ENCODE measurements at regions of chr3 and their contacts with region 1.

Region 1: DNA sequence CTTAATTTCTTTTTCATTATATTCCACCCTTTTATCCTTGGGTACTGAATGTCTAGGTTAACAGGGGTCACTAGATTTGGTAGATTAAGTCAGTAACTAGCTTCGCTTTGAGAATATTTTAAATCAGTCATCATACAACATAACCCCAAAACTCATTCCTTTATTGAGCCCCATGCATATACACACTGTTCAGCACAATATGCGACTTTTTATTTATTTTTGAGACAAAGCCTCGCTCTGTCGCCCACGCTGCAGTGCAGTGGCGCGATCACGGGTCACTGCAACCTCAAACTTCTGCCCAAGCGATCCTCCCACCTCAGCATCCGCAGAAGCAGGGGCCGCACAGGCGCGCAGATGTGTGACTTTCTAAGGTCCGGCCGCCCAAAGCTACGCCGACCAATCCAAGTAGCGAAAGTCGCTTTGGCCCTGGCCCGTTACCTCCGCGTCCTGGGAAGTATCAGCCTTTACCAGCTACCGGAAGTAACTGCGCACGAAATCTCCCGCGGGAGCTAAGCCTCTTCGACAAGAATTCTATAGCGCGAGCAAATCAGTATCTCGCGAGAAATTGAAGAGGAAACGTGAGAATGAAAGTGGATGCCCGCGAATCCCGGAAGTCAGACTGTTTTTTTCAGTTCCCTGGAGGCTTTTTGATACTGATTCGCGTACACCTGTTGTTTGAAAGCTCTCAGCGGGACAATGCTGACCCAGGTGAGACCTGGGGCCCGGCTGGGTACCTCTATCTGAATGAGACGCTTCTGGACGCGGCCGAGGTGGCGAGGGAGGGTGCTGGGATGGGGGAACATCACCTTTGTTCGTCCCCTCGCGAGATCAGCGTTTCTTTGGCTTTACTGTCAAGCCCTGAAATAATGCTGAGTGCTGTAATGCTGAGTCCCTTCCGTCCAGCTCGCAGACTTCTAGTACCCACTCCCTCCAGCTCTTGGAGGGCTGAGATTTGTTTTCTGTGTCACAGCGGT is at the starts of genes DHFR2 and NSUN3:
- DNase-seq: peak; percentile 82

Region 2: GRCh38 chr3:93973131-93974126 is 89.3 kb before region 1 on chr3 and contains the start of gene PROS1:
- CTCF ChIA-PET with region 1: no interaction called
- POLR2A ChIA-PET with region 1: interaction called, 10 read pairs
- DNase-seq: peak; percentile 64

Region 3: GRCh38 chr3:93979833-93980676 is 82.7 kb before region 1 on chr3 and contains the start of gene ARL13B:
- CTCF ChIA-PET with region 1: no interaction called
- POLR2A ChIA-PET with region 1: interaction called, 10 read pairs
- DNase-seq: peak; percentile 89

Region 4: GRCh38 chr3:94028093-94028833 is 34.5 kb before region 1 on chr3 and contains the start of gene STX19:
- CTCF ChIA-PET with region 1: no interaction called
- POLR2A ChIA-PET with region 1: interaction called, 14 read pairs
- DNase-seq: no peak

Region 5: GRCh38 chr3:94036909-94037507 is 25.7 kb before region 1 on chr3:
- CTCF ChIA-PET with region 1: no interaction called
- POLR2A ChIA-PET with region 1: interaction called, 10 read pairs
- DNase-seq: peak; percentile 30

Region 6: GRCh38 chr3:94083261-94083660 is 20.5 kb after region 1 on chr3:
- CTCF ChIA-PET with region 1: no interaction called
- POLR2A ChIA-PET with region 1: interaction called, 14 read pairs
- DNase-seq: no peak

Region 7: DNA sequence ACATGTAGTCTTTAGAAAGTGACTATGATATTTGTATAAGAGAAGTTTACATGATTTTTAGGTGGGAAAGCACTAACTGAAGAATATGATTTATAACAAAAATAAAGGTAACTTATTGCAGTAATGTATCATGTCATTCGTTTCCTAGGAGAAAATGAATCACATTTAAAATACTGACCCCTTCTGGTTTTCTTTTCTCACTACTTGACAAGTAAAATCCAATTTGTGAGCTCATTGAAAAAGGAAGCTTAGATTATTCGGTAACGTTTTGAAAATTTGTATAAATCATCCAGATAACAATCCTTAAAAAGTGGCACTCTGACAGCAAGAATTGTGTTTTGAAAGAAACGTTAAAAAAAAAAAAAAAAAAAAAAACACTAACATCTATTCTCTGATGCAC is 39.1 kb after region 1 on chr3:
- CTCF ChIA-PET with region 1: interaction called, 3 read pairs
- POLR2A ChIA-PET with region 1: interaction called, 11 read pairs
- DNase-seq: no peak

Region 8: DNA sequence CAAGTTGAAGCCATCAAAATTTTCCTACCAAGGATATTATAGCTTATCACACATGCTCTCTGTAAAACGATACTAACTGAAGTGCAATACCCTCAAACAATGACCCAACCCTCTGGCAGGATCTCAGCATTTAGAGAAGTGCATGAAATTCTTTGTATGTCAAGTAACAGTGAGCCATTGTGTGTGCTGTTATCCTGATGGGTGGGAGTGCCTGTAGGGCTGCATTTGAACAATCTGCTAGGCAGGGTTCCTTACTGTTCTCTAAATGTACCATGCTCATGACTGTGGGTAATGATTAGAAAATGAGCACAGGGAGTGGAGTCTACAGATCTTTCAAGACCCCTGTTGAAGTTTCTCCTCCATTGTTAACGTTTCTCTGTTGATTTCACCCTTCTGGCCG is 398.2 kb after region 1 on chr3:
- CTCF ChIA-PET with region 1: no interaction called
- POLR2A ChIA-PET with region 1: no interaction called
- DNase-seq: no peak

Region 9: DNA sequence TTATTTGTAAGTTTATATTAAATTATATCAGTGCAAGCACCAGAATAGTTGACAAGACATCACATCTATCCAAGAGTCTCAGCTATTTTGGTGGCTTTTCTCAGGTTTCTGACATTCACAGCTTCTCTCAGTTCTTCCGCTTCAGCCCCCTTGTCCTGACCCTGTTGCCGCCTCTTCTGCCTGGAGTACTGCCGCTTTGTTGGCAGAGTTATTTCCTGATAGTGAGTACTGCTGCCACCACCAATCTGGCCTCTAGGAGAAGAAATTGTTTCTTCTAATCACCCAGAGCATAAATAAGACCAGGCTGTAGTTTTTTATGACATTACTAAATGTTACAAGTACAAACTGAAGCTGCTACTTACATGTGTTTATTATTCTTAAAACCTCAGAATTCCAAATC is 470.2 kb after region 1 on chr3:
- CTCF ChIA-PET with region 1: no interaction called
- POLR2A ChIA-PET with region 1: no interaction called
- DNase-seq: no peak

Measured in HEK293T (cell line).